Heart right ventricle (tissue), 16 donors: ENCODE measurements at regions of chr14 and their contacts with region 1.

Region 1: DNA sequence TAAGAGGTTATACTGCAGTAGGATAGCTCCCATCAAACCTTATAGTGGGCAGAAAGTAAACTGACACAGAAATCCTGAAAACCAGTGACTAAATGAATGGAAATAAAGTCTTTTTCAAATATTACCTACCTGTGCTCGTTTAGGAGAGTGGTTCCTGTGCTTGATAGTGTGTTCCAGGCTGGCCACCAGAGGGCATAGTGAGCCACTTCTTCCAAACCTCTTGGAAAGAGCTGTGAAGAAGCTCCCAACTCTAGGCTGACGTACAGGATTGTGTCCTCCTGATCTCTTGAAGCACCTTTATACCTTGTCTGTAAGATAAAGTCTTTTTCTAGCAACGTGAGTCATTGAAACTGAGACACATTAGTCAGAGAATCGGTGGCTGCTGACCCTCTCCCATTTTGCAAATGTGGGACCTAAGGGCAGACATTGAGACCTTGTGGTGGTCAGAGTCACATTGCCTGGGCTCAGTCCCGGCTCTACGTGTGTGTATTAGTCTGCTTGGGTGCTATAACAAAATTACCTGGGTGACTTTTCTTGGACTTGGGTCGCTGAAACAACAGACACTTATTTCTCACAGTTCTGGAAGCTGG is 17.6 kb downstream of the TDP1 start:
- DNase-seq: peak; percentile 40 to 52
- ATAC-seq: peak; percentile 66 to 88 (median 82)
- H3K4me3 ChIP-seq: no peak overlapping the region
- H3K27ac ChIP-seq: no peak overlapping the region
- H3K4me1 ChIP-seq: no peaks in the 10 kb centered on the region
- H3K27me3 ChIP-seq: no peaks in the 10 kb centered on the region
- CTCF ChIP-seq: peak; percentile 40 to 90 (median 87)

Region 2: GRCh38 chr14:90060312-90060964 is 87.1 kb after region 1 on chr14:
- intact Hi-C with region 1: loop called in 2 of 10 experiments (anchors 5 to 10 kb)
- DNase-seq: peak in 1 of 2 donors; percentile 61
- ATAC-seq: peak; percentile 72 to 91 (median 82)
- H3K4me3 ChIP-seq: peak overlapping the region; percentile 24 to 64 (median 50)
- H3K27ac ChIP-seq: peak overlapping the region in 3 of 10 donors; percentile 31 to 52 (median 45)
- H3K4me1 ChIP-seq: peaks cover 4 to 41% (median 22%) of the 10 kb centered on the region in 9 donors
- H3K27me3 ChIP-seq: peaks cover 21 to 99% (median 90%) of the 10 kb centered on the region in 7 donors
- CTCF ChIP-seq: peak in 8 of 9 donors; percentile 11 to 68 (median 59)